Left cardiac atrium (tissue), 4 donors: ENCODE measurements at regions of chr1 and their contacts with region 1.

Region 1: GRCh38 chr1:205919026-205919746 is 24.1 kb downstream of the SLC26A9 start:
- DNase-seq: peak; percentile 78
- ATAC-seq: peak; percentile 53 to 58

Region 2: GRCh38 chr1:205791568-205792180 is 127.5 kb before region 1 on chr1:
- intact Hi-C with region 1: loop called (anchors 5 kb)
- DNase-seq: peak; percentile 63
- ATAC-seq: peak; percentile 85 to 87

Region 3: GRCh38 chr1:205977402-205978014 is 58.3 kb after region 1 on chr1:
- intact Hi-C with region 1: loop called (anchors 1 to 5 kb)
- DNase-seq: peak; percentile 66
- ATAC-seq: peak; percentile 77 to 85

Region 4: DNA sequence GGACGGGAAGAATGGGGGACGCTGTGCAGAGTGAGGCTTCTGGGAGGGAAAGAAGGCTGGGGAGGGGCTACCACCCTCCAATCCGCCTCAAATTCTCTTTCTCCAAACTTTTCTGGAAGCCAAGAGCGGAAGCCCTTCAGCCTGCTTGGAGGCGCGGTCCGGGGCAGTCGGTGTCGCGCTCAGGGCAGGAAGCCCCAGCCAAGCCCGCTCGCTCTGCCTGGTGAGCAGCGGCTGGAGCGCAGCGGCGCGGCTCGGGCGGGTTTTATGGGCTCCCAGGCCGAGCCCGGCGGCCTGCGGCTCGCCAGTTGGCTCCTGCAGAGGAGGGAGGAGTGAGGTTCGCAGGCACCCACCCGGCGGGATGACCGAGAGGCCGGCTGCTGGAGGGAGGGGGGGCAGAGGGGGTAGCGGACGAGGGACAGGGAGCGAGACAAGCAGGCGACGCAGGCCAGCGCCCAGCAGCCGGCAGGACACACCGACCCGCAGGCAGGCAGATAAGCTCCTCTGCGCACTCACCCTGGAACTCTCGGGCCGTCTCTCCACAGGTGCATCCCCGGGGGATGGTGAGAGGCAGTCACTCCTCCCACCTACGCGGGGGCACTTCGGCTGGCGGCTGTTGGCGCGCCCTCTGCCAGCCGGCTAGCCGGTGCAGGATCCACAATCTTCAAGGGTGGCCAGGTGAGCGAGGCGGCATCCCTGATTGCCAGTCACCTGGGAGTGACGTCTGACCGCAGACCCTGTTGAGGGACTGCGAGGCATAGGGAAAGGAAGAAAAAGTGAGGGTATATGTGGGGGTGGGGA is 198.2 kb after region 1 on chr1 and contains the start of gene AVPR1B:
- intact Hi-C with region 1: loop called in 1 of 2 experiments (anchors 10 kb)
- DNase-seq: peak; percentile 71
- ATAC-seq: peak; percentile 91 to 92
- total RNA-seq, gene AVPR1B: not detected